Pancreas (tissue), 10 donors: ENCODE measurements at regions of chr2 and their contacts with region 1.

Region 1: GRCh38 chr2:85888684-85889626 is at the start of gene ST3GAL5:
- DNase-seq: peak; percentile 84 to 96 (median 90)
- ATAC-seq: peak; percentile 86 to 90 (median 87)
- H3K4me3 ChIP-seq: peak within 1 kb of the TSS; percentile 66 to 98 (median 92)
- H3K27ac ChIP-seq: peak within 1 kb of the TSS; percentile 43 to 86 (median 78)
- H3K4me1 ChIP-seq: peaks cover 0 to 15% (median 4%) of the 10 kb centered on the region in 3 donors
- H3K27me3 ChIP-seq: no peaks in the 10 kb centered on the region
- CTCF ChIP-seq: peak; percentile 23 to 46 (median 42)
- total RNA-seq, gene ST3GAL5: 4.4 to 11.4 (median 5.4) TPM

Region 2: GRCh38 chr2:86035883-86036668 is 147.1 kb after region 1 on chr2:
- intact Hi-C with region 1: loop called in 2 of 3 experiments (anchors 5 to 10 kb)
- DNase-seq: peak; percentile 72 to 90 (median 88)
- ATAC-seq: peak; percentile 85 to 91 (median 89)
- H3K4me3 ChIP-seq: no peak overlapping the region
- H3K27ac ChIP-seq: peak overlapping the region; percentile 78 to 90 (median 79)
- H3K4me1 ChIP-seq: peaks cover 27 to 35% (median 30%) of the 10 kb centered on the region in 3 donors
- H3K27me3 ChIP-seq: no peaks in the 10 kb centered on the region
- CTCF ChIP-seq: peak in 2 of 4 donors; percentile 13 to 15